Activated CD4-positive, alpha-beta T cell treated with anti-CD3 and anti-CD28 coated beads, Interleukin-2, amount 10 ng/mL, durations not matched to agents 7 days and 5 days (primary cell): ENCODE measurements at regions of chr4 and their contacts with region 1.

Region 1: GRCh38 chr4:184298254-184298653 is 80.6 kb upstream of the ENPP6 start:
- DNase-seq: no peak
- H3K4me3 Mint-ChIP-seq: no peak overlapping the region
- H3K27ac Mint-ChIP-seq: no peak overlapping the region
- H3K4me1 Mint-ChIP-seq: no peaks in the 10 kb centered on the region
- H3K27me3 Mint-ChIP-seq: no peaks in the 10 kb centered on the region

Region 2: GRCh38 chr4:184287697-184288255 is 10.5 kb before region 1 on chr4:
- CTCF ChIA-PET with region 1: interaction called, 10 read pairs
- POLR2A ChIA-PET with region 1: no interaction called
- DNase-seq: no peak
- H3K4me3 Mint-ChIP-seq: no peak overlapping the region
- H3K27ac Mint-ChIP-seq: peak overlapping the region; percentile 79
- H3K4me1 Mint-ChIP-seq: peaks cover 38% of the 10 kb centered on the region
- H3K27me3 Mint-ChIP-seq: no peaks in the 10 kb centered on the region